Astrocyte of the cerebellum (primary cell): ENCODE measurements at regions of chr13 and their contacts with region 1.

Region 1: GRCh38 chr13:95676762-95677563 is at the start of gene DNAJC3:
- DNase-seq: peak; percentile 95
- H3K4me3 ChIP-seq: peak within 1 kb of the TSS; percentile 66
- CTCF ChIP-seq: no peak

Region 2: DNA sequence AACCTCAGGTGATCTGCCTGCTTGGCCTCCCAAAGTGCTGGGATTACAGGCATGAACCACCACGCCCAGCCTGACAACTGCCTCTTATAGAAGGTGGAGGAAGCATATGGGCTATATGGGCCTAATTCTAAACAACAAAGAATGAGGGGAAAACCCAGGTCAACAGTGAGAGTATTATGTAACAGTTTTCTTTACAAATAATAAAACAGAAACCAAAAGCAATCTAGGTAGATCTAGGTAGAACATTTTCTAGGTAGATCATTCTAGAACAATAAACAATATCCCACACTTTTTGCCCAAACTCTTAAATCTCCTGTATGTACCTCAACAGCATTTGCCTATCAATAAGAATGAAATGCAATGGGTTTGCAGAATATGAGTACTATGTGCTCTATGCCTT is 643.1 kb before region 1 on chr13:
- in situ Hi-C with region 1: no loop called
- DNase-seq: no peak
- H3K4me3 ChIP-seq: no peak overlapping the region
- CTCF ChIP-seq: no peak

Region 3: GRCh38 chr13:95582716-95583115 is 94.2 kb before region 1 on chr13:
- in situ Hi-C with region 1: loop called (anchors 5 kb)
- DNase-seq: no peak
- H3K4me3 ChIP-seq: no peak overlapping the region
- CTCF ChIP-seq: no peak

Region 4: GRCh38 chr13:95714142-95714829 is 37.3 kb after region 1 on chr13:
- in situ Hi-C with region 1: no loop called
- DNase-seq: peak; percentile 43
- H3K4me3 ChIP-seq: no peak overlapping the region
- CTCF ChIP-seq: no peak